OCI-LY7 (cell line): ENCODE measurements at regions of chr22 and their contacts with region 1.

Region 1: DNA sequence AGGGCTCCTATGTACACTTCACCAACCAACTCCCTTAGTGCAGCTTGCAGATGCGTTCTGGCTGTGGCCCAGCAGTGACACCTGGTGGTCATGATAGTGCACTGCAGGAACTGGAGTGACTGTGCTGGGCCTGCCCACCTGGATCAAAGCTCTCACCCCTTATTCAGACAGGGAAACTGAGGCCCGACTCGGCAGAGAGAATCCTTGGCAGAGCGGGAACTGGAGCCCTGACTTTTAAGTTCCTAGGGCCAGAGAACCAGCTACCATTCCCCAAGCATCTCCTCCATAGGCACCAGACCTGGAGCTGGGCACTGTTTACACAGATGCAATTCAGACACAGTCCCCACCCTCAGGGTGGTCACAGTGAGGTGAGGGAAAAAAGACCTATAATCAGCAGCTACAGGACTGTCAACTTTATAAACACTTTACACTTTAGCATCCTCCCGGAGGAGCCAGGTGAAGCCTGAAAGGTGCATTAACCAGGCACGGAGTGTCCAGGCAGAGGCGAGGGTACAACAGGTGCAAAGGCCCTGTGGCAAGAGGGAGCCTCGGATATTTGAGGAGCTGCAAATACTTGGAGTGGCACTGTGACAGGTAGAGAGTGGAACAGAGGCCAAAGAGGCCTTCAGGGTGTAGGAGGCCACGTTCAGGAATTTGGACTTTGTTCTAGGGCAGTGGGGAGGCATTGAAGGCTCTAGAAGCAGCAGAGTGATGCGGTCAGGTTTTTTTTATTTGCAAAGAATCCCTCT is 22.0 kb downstream of the RHBDD3 start:
- DNase-seq: peak; percentile 70
- H3K4me3 ChIP-seq: no peak overlapping the region
- H3K27ac ChIP-seq: no peak overlapping the region
- H3K4me1 ChIP-seq: no peaks in the 10 kb centered on the region
- CTCF ChIP-seq: peak; percentile 92

Region 2: GRCh38 chr22:28594797-28595462 is 650.9 kb before region 1 on chr22:
- CTCF ChIA-PET with region 1: no interaction called
- POLR2A ChIA-PET with region 1: no interaction called
- intact Hi-C with region 1: loop called (anchors 5 kb)
- DNase-seq: peak; percentile 62
- H3K4me3 ChIP-seq: no peak overlapping the region
- H3K27ac ChIP-seq: no peak overlapping the region
- H3K4me1 ChIP-seq: no peaks in the 10 kb centered on the region
- CTCF ChIP-seq: peak; percentile 85

Region 3: DNA sequence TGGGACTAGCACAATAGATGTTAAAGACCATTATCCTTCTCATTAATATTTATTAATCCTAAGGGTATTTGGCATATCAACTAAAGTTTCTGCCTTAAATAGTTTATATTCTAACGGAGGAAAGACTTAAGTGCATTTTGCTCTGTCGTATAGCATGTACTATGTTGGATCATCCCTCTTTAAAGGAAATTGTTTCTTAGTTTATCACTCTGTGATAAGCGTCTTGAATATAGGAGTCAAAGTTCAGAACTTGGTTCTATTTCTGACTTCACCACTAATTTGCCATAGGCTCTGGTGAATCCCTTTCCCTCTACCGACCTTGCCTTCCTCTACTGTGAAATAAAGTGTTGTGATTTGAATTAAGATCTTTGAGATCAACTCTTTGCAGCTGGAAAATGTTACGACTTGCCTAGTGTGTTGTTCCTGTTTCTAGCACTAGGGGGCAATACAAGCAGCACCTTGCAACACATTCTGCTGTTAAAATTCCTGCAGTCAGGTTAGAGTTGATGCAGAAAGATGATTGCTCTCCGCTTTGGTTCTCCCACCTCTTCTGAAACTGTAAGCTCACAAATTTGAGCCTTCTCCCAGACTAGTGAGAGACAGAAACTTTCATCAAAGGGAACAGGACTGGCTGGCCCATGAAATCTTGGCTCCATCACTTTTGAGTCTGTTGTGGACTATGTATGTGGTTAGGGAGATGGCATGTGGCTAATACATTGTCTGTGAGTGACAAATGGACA is 390.3 kb before region 1 on chr22:
- CTCF ChIA-PET with region 1: no interaction called
- POLR2A ChIA-PET with region 1: no interaction called
- intact Hi-C with region 1: loop called (anchors 10 kb)
- DNase-seq: peak; percentile 70
- H3K4me3 ChIP-seq: no peak overlapping the region
- H3K27ac ChIP-seq: no peak overlapping the region
- H3K4me1 ChIP-seq: no peaks in the 10 kb centered on the region
- CTCF ChIP-seq: peak; percentile 97

Region 4: GRCh38 chr22:28955817-28956216 is 290.0 kb before region 1 on chr22:
- CTCF ChIA-PET with region 1: no interaction called
- POLR2A ChIA-PET with region 1: no interaction called
- intact Hi-C with region 1: no loop called
- DNase-seq: peak; percentile 65
- H3K4me3 ChIP-seq: no peak overlapping the region
- H3K27ac ChIP-seq: no peak overlapping the region
- H3K4me1 ChIP-seq: peaks cover 21% of the 10 kb centered on the region
- CTCF ChIP-seq: no peak

Region 5: DNA sequence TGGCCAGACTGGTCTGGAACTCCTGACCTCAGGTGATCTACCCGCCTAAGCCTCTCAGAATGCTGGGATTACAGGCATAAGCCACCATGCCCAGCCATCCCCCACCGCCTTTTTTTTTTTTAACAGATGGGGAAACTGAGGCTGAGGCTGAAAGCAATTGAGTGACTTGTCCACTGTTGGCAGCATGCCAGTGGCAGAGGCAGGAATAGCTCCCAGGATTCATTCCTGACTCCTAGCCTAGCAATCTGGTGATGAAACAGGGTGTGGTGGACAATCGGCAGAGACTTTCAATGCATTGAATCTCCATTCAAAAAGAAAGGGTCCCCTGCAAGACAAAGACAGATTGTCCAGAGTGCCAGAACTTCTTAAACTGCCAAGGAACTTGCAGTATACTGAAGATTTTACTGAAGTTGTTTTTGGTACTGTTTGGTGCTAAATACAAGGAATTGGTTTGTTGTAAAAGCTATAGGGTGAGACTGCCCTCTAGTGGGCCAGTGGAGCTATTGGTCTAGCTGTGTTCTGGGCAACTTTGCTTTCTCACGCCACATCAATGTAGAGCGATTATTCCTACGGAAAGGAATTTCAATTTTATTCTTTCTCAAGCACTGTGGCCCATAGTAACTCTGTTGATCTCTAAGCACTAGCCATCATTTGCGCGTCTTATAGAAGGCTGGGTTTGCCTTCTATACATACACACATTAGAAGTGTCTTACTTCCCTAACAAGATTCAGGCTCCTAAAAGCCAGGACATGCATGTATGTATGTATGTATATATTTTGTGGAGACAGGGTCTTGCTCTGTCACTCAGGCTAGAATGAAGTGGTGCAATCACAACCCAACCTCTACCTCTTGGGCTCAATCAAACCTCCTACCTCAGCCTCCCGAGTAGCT is 205.2 kb before region 1 on chr22:
- CTCF ChIA-PET with region 1: no interaction called
- POLR2A ChIA-PET with region 1: no interaction called
- intact Hi-C with region 1: loop called (anchors 5 kb)
- DNase-seq: peak; percentile 76
- H3K4me3 ChIP-seq: no peak overlapping the region
- H3K27ac ChIP-seq: no peak overlapping the region
- H3K4me1 ChIP-seq: no peaks in the 10 kb centered on the region
- CTCF ChIP-seq: peak; percentile 99

Region 6: GRCh38 chr22:29202212-29203192 is 43.3 kb before region 1 on chr22:
- CTCF ChIA-PET with region 1: no interaction called
- POLR2A ChIA-PET with region 1: no interaction called
- intact Hi-C with region 1: loop called (anchors 1 kb)
- DNase-seq: peak; percentile 70
- H3K4me3 ChIP-seq: no peak overlapping the region
- H3K27ac ChIP-seq: no peak overlapping the region
- H3K4me1 ChIP-seq: peaks cover 8% of the 10 kb centered on the region
- CTCF ChIP-seq: peak; percentile 78

Region 7: GRCh38 chr22:29231971-29232959 is 13.5 kb before region 1 on chr22:
- CTCF ChIA-PET with region 1: no interaction called
- POLR2A ChIA-PET with region 1: no interaction called
- intact Hi-C with region 1: no loop called
- DNase-seq: no peak
- H3K4me3 ChIP-seq: no peak overlapping the region
- H3K27ac ChIP-seq: no peak overlapping the region
- H3K4me1 ChIP-seq: no peaks in the 10 kb centered on the region
- CTCF ChIP-seq: no peak